Caco-2 (cell line): ENCODE measurements at regions of chr10 and their contacts with region 1.

Region 1: GRCh38 chr10:12500381-12501303 is 151.3 kb downstream of the CAMK1D start:
- DNase-seq: peak in 1 of 2 experiments; percentile 40
- H3K4me3 ChIP-seq: peak overlapping the region; percentile 9; the same call in 1 of the 2 replicates
- H3K4me3 Mint-ChIP-seq: peak overlapping the region; percentile 72
- H3K27ac Mint-ChIP-seq: peak overlapping the region; percentile 99
- H3K4me1 ChIP-seq: peaks cover 59% of the 10 kb centered on the region
- H3K4me1 Mint-ChIP-seq: peaks cover 42% of the 10 kb centered on the region
- H3K27me3 ChIP-seq: no peaks in the 10 kb centered on the region
- H3K27me3 Mint-ChIP-seq: no peaks in the 10 kb centered on the region
- CTCF ChIP-seq: no peak

Region 2: GRCh38 chr10:12308057-12308456 is 192.6 kb before region 1 on chr10:
- CTCF ChIA-PET with region 1: no interaction called
- POLR2A ChIA-PET with region 1: no interaction called
- intact Hi-C with region 1: no loop called
- DNase-seq: no peak
- H3K4me3 ChIP-seq: no peak overlapping the region
- H3K4me3 Mint-ChIP-seq: no peak overlapping the region
- H3K27ac Mint-ChIP-seq: no peak overlapping the region
- H3K4me1 ChIP-seq: no peaks in the 10 kb centered on the region
- H3K4me1 Mint-ChIP-seq: no peaks in the 10 kb centered on the region
- H3K27me3 ChIP-seq: no peaks in the 10 kb centered on the region
- H3K27me3 Mint-ChIP-seq: no peaks in the 10 kb centered on the region
- CTCF ChIP-seq: no peak

Region 3: GRCh38 chr10:12358863-12359564 is 141.6 kb before region 1 on chr10:
- CTCF ChIA-PET with region 1: no interaction called
- POLR2A ChIA-PET with region 1: no interaction called
- intact Hi-C with region 1: loop called (anchors 5 kb)
- DNase-seq: no peak
- H3K4me3 ChIP-seq: no peak overlapping the region
- H3K4me3 Mint-ChIP-seq: no peak overlapping the region
- H3K27ac Mint-ChIP-seq: no peak overlapping the region
- H3K4me1 ChIP-seq: no peaks in the 10 kb centered on the region
- H3K4me1 Mint-ChIP-seq: peaks cover 6% of the 10 kb centered on the region
- H3K27me3 ChIP-seq: no peaks in the 10 kb centered on the region
- H3K27me3 Mint-ChIP-seq: peaks cover 19% of the 10 kb centered on the region
- CTCF ChIP-seq: no peak

Region 4: GRCh38 chr10:12638103-12638502 is 137.5 kb after region 1 on chr10:
- CTCF ChIA-PET with region 1: no interaction called
- POLR2A ChIA-PET with region 1: no interaction called
- intact Hi-C with region 1: loop called (anchors 5 kb)
- DNase-seq: peak; percentile 75 to 85
- H3K4me3 ChIP-seq: no peak overlapping the region
- H3K4me3 Mint-ChIP-seq: no peak overlapping the region
- H3K27ac Mint-ChIP-seq: no peak overlapping the region
- H3K4me1 ChIP-seq: peaks cover 12% of the 10 kb centered on the region
- H3K4me1 Mint-ChIP-seq: peaks cover 19% of the 10 kb centered on the region
- H3K27me3 ChIP-seq: no peaks in the 10 kb centered on the region
- H3K27me3 Mint-ChIP-seq: no peaks in the 10 kb centered on the region
- CTCF ChIP-seq: no peak